WTC11 (cell line): ENCODE measurements at regions of chr1 and their contacts with region 1.

Region 1: GRCh38 chr1:25204797-25205480 is 27.4 kb downstream of the SYF2 start:
- DNase-seq: no peak
- ATAC-seq: peak; percentile 57; the same call in 1 of the 2 replicates
- H3K4me3 Mint-ChIP-seq: no peak overlapping the region
- H3K27ac Mint-ChIP-seq: no peak overlapping the region
- H3K4me1 Mint-ChIP-seq: peaks cover 15% of the 10 kb centered on the region
- H3K27me3 Mint-ChIP-seq: no peaks in the 10 kb centered on the region
- CTCF ChIP-seq: peak; percentile 75

Region 2: GRCh38 chr1:24978383-24979032 is 226.4 kb before region 1 on chr1:
- CTCF ChIA-PET with region 1: no interaction called
- POLR2A ChIA-PET with region 1: no interaction called
- DNase-seq: no peak
- ATAC-seq: no peak
- H3K4me3 Mint-ChIP-seq: no peak overlapping the region
- H3K27ac Mint-ChIP-seq: no peak overlapping the region
- H3K4me1 Mint-ChIP-seq: no peaks in the 10 kb centered on the region
- H3K27me3 Mint-ChIP-seq: peaks cover 11% of the 10 kb centered on the region
- CTCF ChIP-seq: no peak

Region 3: DNA sequence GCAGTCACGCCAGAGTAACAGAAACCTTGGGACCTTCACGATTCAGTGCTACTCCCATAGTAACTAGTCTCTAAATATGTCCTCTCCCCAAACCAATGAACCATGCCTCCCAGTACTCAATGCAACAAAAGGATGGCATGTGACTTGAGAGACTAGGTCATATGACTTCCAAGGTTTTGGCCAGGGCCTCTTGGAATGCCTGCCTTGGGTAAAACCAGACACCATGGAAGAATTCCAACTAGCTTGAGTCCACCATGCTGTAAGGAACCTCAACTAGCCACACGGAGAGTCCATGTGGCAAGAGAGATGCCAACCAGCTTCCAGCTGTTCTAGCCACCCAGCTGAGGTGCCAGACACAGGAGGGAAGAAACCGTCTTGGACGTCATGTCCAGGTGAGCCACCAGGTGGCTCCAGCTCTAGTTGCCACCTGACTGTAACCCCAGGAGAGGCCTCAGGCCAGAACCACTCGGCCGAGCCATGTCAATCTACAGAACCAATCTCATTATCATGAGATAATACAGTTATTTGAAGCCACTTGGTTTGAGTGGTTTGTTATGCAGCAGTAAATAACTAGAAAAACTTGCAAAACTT is 87.6 kb before region 1 on chr1:
- CTCF ChIA-PET with region 1: interaction called, 16 read pairs
- POLR2A ChIA-PET with region 1: no interaction called
- DNase-seq: peak; percentile 70
- ATAC-seq: peak; percentile 92
- H3K4me3 Mint-ChIP-seq: no peak overlapping the region
- H3K27ac Mint-ChIP-seq: no peak overlapping the region
- H3K4me1 Mint-ChIP-seq: no peaks in the 10 kb centered on the region
- H3K27me3 Mint-ChIP-seq: no peaks in the 10 kb centered on the region; the same call in 1 of the 2 replicates
- CTCF ChIP-seq: peak; percentile 44

Region 4: GRCh38 chr1:25194572-25195020 is 10.3 kb before region 1 on chr1:
- CTCF ChIA-PET with region 1: interaction called, 14 read pairs
- POLR2A ChIA-PET with region 1: no interaction called
- DNase-seq: no peak
- ATAC-seq: no peak
- H3K4me3 Mint-ChIP-seq: no peak overlapping the region
- H3K27ac Mint-ChIP-seq: no peak overlapping the region
- H3K4me1 Mint-ChIP-seq: peaks cover 9% of the 10 kb centered on the region
- H3K27me3 Mint-ChIP-seq: no peaks in the 10 kb centered on the region
- CTCF ChIP-seq: no peak